MCF 10A (cell line): ENCODE measurements at regions of chr1 and their contacts with region 1.

Region 1: DNA sequence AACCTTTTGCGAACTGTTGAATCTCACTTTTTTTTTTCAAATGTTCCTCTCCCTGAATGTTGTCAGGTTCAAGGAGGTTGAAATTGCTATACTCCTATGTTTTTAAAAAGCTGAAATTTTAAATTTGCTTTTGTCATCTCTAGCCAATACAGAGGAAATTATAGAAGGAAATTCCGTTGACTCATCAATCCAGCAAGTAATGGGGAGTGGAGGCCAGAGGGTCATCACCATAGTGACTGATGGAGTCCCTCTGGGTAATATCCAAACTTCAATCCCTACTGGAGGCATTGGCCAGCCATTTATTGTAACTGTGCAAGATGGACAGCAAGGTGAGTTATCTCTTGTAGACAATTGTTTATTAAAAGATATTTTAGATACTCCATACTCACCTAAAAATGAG is 36.3 kb downstream of the GABPB2 start:
- DNase-seq: peak; percentile 13
- H3K4me3 Mint-ChIP-seq: no peak overlapping the region
- H3K27ac Mint-ChIP-seq: no peak overlapping the region
- H3K4me1 Mint-ChIP-seq: no peaks in the 10 kb centered on the region
- H3K27me3 Mint-ChIP-seq: no peaks in the 10 kb centered on the region
- CTCF ChIP-seq: no peak

Region 2: GRCh38 chr1:151085953-151086559 is 20.8 kb before region 1 on chr1:
- CTCF ChIA-PET with region 1: interaction called, 37 read pairs
- POLR2A ChIA-PET with region 1: interaction called, 5 read pairs
- intact Hi-C with region 1: no loop called
- DNase-seq: no peak
- H3K4me3 Mint-ChIP-seq: no peak overlapping the region
- H3K27ac Mint-ChIP-seq: no peak overlapping the region
- H3K4me1 Mint-ChIP-seq: no peaks in the 10 kb centered on the region
- H3K27me3 Mint-ChIP-seq: no peaks in the 10 kb centered on the region
- CTCF ChIP-seq: no peak

Region 3: DNA sequence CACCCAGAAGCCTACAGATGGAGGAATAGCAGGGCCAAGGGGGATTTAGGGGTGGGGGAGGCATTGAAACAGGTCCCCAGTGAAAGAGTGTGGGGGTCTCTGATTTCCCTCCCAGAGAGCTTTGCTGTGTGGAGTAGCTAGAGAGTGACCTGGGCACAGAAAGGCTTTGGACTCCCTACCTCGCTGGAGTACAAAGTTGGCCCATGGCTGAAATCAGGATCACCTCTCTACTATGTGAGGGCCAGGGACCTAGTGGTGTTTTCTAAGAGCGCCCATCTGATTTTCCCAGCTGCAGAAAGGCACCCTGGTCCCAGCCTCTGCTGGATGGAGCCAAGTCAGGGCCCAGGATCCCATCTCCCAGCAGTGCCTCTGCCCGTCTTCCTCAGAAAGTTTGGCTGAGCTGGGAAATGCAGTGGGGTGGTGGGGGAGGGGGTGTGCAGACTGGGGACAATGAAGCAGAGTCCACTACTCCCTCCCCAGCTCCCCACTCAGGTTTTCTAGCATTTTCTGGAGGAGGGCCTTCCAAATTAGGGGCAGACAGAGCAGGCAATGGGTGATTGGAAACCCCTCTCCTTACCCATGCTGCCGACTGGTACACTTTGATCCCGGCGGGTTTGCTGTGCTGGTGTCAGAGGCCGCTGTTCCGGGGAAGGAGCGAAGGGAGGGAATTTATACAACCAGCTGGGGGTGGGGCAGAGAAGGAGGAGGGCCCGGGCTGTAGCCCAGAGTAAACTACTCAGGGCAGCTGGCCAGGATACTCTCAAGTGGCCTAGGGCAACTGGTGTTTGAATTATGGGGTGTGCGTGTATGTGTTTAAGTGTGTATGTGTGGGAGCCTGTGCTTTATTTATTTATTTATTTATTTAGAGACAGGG is 265.4 kb after region 1 on chr1 and contains the start of gene SELENBP1:
- CTCF ChIA-PET with region 1: no interaction called
- POLR2A ChIA-PET with region 1: no interaction called
- intact Hi-C with region 1: no loop called
- DNase-seq: peak; percentile 94
- H3K4me3 Mint-ChIP-seq: peak within 1 kb of the TSS; percentile 69
- H3K27ac Mint-ChIP-seq: peak within 1 kb of the TSS; percentile 13
- H3K4me1 Mint-ChIP-seq: peaks cover 25% of the 10 kb centered on the region
- H3K27me3 Mint-ChIP-seq: peaks cover 7% of the 10 kb centered on the region
- CTCF ChIP-seq: no peak
- total RNA-seq, gene SELENBP1: 8.2 and 11.6 TPM in 2 replicates